PC-3 (cell line): ENCODE measurements at regions of chr10 and their contacts with region 1.

Region 1: GRCh38 chr10:35236739-35237138 is 99.6 kb upstream of the CCNY start:
- DNase-seq: peak; percentile 92
- ATAC-seq: peak; percentile 97
- H3K4me3 ChIP-seq: no peak overlapping the region
- H3K27ac ChIP-seq: no peak overlapping the region
- H3K4me1 ChIP-seq: no peaks in the 10 kb centered on the region
- H3K27me3 ChIP-seq: no peaks in the 10 kb centered on the region
- CTCF ChIP-seq: peak; percentile 99

Region 2: DNA sequence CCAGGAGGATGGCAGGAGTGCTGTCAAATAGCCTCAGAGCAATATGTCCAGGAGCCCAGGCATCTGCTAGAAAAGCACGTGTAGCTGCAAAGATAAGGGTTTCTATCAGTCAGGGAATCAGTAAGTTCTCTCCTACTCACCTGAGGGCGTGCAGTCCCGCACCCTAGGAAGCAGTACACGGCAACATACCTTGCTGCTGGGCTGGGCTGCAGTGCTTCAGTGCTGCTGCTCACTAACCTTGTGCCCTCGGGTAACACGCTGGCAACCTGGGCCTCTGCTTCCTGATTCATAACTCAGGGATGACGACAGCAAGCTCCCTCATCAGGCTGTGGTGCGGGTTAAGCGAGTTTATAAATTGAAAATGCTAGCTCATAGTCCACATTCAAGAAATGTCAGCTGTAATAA is 70.1 kb after region 1 on chr10:
- CTCF ChIA-PET with region 1: interaction called, 3 read pairs
- POLR2A ChIA-PET with region 1: no interaction called
- intact Hi-C with region 1: loop called (anchors 1 kb)
- DNase-seq: peak; percentile 99
- ATAC-seq: peak; percentile 89
- H3K4me3 ChIP-seq: peak overlapping the region; percentile 56
- H3K27ac ChIP-seq: peak overlapping the region; percentile 83
- H3K4me1 ChIP-seq: peaks cover 17% of the 10 kb centered on the region
- H3K27me3 ChIP-seq: no peaks in the 10 kb centered on the region
- CTCF ChIP-seq: no peak; the same call in 1 of the 2 replicates

Region 3: GRCh38 chr10:35501921-35502320 is 265.2 kb after region 1 on chr10:
- CTCF ChIA-PET with region 1: no interaction called
- POLR2A ChIA-PET with region 1: no interaction called
- intact Hi-C with region 1: loop called (anchors 1 kb)
- DNase-seq: peak; percentile 57
- ATAC-seq: peak; percentile 76
- H3K4me3 ChIP-seq: no peak overlapping the region
- H3K27ac ChIP-seq: no peak overlapping the region
- H3K4me1 ChIP-seq: no peaks in the 10 kb centered on the region
- H3K27me3 ChIP-seq: no peaks in the 10 kb centered on the region
- CTCF ChIP-seq: peak; percentile 93

Region 4: DNA sequence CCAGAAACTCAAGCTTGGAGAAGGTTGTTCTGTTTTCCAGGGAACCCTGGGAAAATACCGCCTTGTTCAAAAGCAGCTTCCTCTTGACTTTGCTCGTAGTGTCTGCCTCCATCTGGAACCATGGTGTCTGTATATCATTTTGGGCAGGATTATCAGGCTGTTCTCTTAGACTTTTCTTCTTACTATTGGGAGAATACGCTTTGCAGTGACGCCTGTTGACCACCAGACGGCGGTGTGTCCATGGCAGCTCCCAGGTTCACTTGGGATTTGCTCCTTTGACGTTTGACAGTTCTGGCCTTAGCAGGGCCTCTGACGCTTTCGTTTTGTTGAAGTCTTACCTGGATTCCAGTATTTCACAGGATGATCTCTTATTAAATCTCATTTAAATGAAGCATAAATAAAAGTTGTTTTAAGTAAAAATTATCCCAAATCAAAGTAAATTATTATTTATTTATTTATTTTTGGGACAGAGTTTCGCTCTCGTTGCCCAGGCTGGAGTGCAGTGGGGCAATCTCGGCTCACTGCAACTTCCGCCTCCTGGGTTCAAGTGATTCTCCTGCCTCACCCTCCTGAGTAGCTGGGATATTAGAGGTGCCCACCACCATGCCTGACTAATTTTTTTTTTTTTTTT is 326.6 kb after region 1 on chr10:
- CTCF ChIA-PET with region 1: interaction called, 16 read pairs
- POLR2A ChIA-PET with region 1: no interaction called
- intact Hi-C with region 1: loop called (anchors 1 kb)
- DNase-seq: peak; percentile 98
- ATAC-seq: peak; percentile 85
- H3K4me3 ChIP-seq: no peak overlapping the region
- H3K27ac ChIP-seq: no peak overlapping the region
- H3K4me1 ChIP-seq: 0 out of 2 replicates have a peak, but pooled peaks cover 2% of the 10 kb centered on the region
- H3K27me3 ChIP-seq: no peaks in the 10 kb centered on the region
- CTCF ChIP-seq: peak; percentile 100

Region 5: GRCh38 chr10:35598384-35598783 is 361.6 kb after region 1 on chr10:
- CTCF ChIA-PET with region 1: no interaction called
- POLR2A ChIA-PET with region 1: no interaction called
- intact Hi-C with region 1: loop called (anchors 1 kb)
- DNase-seq: peak; percentile 75
- ATAC-seq: peak; percentile 89
- H3K4me3 ChIP-seq: no peak overlapping the region
- H3K27ac ChIP-seq: no peak overlapping the region
- H3K4me1 ChIP-seq: no peaks in the 10 kb centered on the region
- H3K27me3 ChIP-seq: no peaks in the 10 kb centered on the region
- CTCF ChIP-seq: peak; percentile 99